PC-3 (cell line): ENCODE measurements at regions of chr9 and their contacts with region 1.

Region 1: GRCh38 chr9:18955626-18956025 is 77.4 kb downstream of the SAXO1 start:
- DNase-seq: no peak
- ATAC-seq: no peak
- H3K4me3 ChIP-seq: no peak overlapping the region
- H3K27ac ChIP-seq: no peak overlapping the region
- H3K4me1 ChIP-seq: no peaks in the 10 kb centered on the region
- H3K27me3 ChIP-seq: peaks cover 4% of the 10 kb centered on the region; the same call in 1 of the 2 replicates
- CTCF ChIP-seq: no peak

Region 2: GRCh38 chr9:18909140-18910018 is 46.2 kb before region 1 on chr9:
- CTCF ChIA-PET with region 1: interaction called, 10 read pairs
- POLR2A ChIA-PET with region 1: no interaction called
- intact Hi-C with region 1: no loop called
- DNase-seq: no peak
- ATAC-seq: no peak
- H3K4me3 ChIP-seq: no peak overlapping the region
- H3K27ac ChIP-seq: no peak overlapping the region
- H3K4me1 ChIP-seq: no peaks in the 10 kb centered on the region; the same call in 1 of the 2 replicates
- H3K27me3 ChIP-seq: no peaks in the 10 kb centered on the region
- CTCF ChIP-seq: no peak

Region 3: GRCh38 chr9:18935541-18935940 is 20.1 kb before region 1 on chr9:
- CTCF ChIA-PET with region 1: no interaction called
- POLR2A ChIA-PET with region 1: no interaction called
- intact Hi-C with region 1: no loop called
- DNase-seq: no peak
- ATAC-seq: no peak
- H3K4me3 ChIP-seq: no peak overlapping the region
- H3K27ac ChIP-seq: no peak overlapping the region
- H3K4me1 ChIP-seq: no peaks in the 10 kb centered on the region
- H3K27me3 ChIP-seq: 0 out of 2 replicates have a peak, but pooled peaks cover 3% of the 10 kb centered on the region
- CTCF ChIP-seq: no peak